PC-9 (cell line): ENCODE measurements at regions of chr3 and their contacts with region 1.

Region 1: GRCh38 chr3:122514123-122515019 is at the start of gene KPNA1:
- DNase-seq: peak; percentile 77 to 92
- H3K4me3 ChIP-seq: peak within 1 kb of the TSS; percentile 62
- H3K27ac ChIP-seq: peak within 1 kb of the TSS; percentile 81
- H3K4me1 ChIP-seq: peaks cover 26% of the 10 kb centered on the region
- H3K27me3 ChIP-seq: no peaks in the 10 kb centered on the region
- CTCF ChIP-seq: no peak
- total RNA-seq, gene KPNA1: 78.2 and 89.2 TPM in 2 replicates

Region 2: DNA sequence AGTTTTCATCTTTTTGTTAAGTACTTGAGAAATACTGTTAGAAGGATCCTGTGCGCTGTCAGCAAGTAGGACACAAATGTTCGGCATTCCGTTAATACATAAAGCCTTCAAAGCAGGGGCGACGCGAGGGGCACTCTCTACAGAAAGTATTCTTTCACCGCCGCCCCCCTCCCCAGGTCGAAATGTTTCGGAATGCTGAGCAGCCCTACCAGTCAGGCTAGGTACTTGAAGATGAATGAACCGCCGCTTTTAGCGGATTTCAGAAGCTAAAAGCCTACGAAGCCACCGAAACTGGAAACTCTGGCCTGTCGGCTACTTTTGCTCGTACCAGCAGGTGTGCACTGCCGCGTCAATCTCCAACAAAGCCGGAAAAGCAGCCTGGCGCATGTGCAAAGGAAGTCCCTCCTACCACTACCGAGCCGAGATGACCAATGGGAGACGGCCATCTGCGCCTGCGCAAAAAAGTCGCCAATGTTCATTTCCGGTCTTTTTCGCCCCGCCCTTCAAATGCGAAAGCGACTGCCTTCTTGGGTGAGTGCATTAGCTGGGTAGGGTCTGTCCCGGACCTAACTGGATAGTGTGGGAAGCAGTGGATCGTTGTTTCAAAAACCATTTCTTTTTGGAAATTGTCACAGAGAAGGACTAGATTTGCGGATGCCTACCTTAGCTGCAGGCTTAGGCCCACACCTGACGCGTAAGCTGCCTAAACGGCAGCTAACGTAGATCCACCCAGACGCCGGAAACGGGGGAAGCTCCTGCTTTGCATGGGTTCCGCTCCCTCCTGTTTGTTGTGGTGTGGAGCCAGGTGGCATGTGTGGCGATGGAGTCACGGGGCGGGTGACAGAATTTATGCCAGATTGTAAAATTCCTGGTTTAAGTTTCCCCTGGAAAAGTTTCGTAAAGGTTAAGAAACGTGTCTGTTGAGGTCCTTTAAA is 98.4 kb before region 1 on chr3 and contains the start of gene WDR5B:
- CTCF ChIA-PET with region 1: no interaction called
- POLR2A ChIA-PET with region 1: no interaction called
- intact Hi-C with region 1: loop called (anchors 1 kb)
- DNase-seq: peak; percentile 92 to 99
- H3K4me3 ChIP-seq: peak within 1 kb of the TSS; percentile 76
- H3K27ac ChIP-seq: peak within 1 kb of the TSS; percentile 76
- H3K4me1 ChIP-seq: peaks cover 19% of the 10 kb centered on the region
- H3K27me3 ChIP-seq: no peaks in the 10 kb centered on the region
- CTCF ChIP-seq: peak; percentile 23; the same call in 1 of the 2 replicates
- total RNA-seq, gene WDR5B: 4.5 and 5.8 TPM in 2 replicates

Region 3: GRCh38 chr3:122533931-122534334 is 19.6 kb after region 1 on chr3:
- CTCF ChIA-PET with region 1: no interaction called
- POLR2A ChIA-PET with region 1: no interaction called
- intact Hi-C with region 1: loop called (anchors 1 kb)
- DNase-seq: peak; percentile 81 to 98
- H3K4me3 ChIP-seq: peak overlapping the region; percentile 3; the same call in 1 of the 2 replicates
- H3K27ac ChIP-seq: peak overlapping the region; percentile 97
- H3K4me1 ChIP-seq: peaks cover 27% of the 10 kb centered on the region
- H3K27me3 ChIP-seq: no peaks in the 10 kb centered on the region
- CTCF ChIP-seq: no peak

Region 4: GRCh38 chr3:122548076-122548475 is 33.7 kb after region 1 on chr3:
- CTCF ChIA-PET with region 1: no interaction called
- POLR2A ChIA-PET with region 1: interaction called, 11 read pairs
- intact Hi-C with region 1: no loop called
- DNase-seq: no peak
- H3K4me3 ChIP-seq: no peak overlapping the region
- H3K27ac ChIP-seq: no peak overlapping the region
- H3K4me1 ChIP-seq: no peaks in the 10 kb centered on the region
- H3K27me3 ChIP-seq: no peaks in the 10 kb centered on the region
- CTCF ChIP-seq: no peak

Region 5: GRCh38 chr3:122938756-122939425 is 424.5 kb after region 1 on chr3:
- CTCF ChIA-PET with region 1: no interaction called
- POLR2A ChIA-PET with region 1: no interaction called
- intact Hi-C with region 1: no loop called
- DNase-seq: peak in 1 of 2 experiments; percentile 24
- H3K4me3 ChIP-seq: no peak overlapping the region
- H3K27ac ChIP-seq: no peak overlapping the region
- H3K4me1 ChIP-seq: peaks cover 10% of the 10 kb centered on the region; the same call in 1 of the 2 replicates
- H3K27me3 ChIP-seq: no peaks in the 10 kb centered on the region
- CTCF ChIP-seq: no peak